ENCODE measurements at regions of chr22 and their contacts with region 1.

Region 1: DNA sequence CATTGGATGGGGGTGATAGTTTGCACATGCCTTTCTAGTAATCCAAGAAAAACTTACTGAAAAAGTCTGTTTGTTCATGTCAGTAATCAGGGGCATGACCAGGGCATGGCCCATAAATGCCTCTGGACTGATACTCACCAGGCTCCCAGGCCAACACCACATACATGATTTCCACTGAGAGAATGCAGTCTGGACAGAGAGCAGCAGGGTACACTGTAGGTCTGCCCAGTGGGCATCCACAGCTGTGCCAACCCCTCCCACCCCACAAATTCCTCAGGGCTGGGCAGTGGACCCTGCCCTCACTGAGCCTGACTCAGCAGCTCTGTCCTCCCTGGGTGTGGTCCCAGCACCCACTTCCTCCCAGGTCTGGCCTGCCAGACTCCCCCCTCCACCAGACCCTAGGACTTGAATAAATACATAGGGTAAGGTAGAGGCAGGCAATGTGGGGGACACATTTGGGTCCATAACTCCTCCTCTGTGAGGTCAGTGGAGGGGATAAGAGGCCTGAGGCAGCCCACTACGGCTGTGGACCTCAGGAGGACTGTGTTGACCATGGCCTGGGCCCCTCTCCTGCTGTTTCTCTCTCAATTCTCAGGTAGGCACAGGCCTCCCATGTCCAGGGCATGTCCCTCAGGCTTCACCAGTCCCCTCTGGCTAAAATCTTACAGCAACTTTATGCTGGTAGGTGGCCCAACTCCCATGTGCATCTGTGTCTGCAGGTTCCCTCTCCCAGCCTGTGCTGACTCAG is 92.2 kb upstream of the TOP3B start:
- DNase-seq: no peak
- H3K4me3 ChIP-seq: no peak overlapping the region
- H3K27ac ChIP-seq: no peak overlapping the region
- H3K4me1 ChIP-seq: no peaks in the 10 kb centered on the region
- H3K27me3 ChIP-seq: no peaks in the 10 kb centered on the region
- CTCF ChIP-seq: no peak
- POLR2A ChIP-seq: no peak

Region 2: DNA sequence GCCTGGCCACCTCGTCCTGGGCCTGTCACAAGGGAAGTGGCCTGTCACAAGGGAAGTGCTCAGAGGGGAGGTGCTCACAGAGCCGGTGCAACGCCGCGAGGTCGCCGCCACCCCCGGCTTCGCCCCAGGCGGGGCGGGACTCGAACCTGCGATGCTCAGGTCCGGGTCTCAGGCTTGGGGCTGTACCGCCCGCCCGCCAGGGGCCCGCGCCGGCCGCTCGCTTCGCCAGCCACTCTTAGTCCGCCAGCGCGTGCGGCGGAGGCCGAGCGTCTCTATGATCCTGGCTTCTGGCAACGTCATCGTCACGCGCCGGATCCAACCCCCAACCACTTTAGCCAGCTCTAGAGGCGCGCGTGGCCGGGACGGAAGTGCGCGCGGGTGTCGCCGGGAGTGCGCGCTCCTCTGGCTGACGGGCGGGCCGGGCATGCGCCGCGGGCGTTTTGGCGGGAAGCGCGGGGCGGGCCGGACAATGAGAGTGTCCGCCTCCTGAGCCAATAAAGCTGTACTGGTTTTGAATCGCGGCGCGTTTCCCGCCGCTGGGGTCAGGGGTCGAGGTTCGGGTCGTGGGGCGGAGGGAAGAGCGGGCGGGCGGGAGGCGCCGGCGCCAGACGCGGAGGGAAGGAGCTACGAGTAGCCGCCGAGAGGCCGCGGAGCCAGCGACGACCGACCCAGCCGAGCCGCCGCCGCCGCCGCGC is 1957.7 kb before region 1 on chr22 and contains the start of gene TRMT2A:
- intact Hi-C with region 1: loop called (anchors 10 kb)
- DNase-seq: peak in 1 of 2 donors; percentile 96
- H3K4me3 ChIP-seq: peak within 1 kb of the TSS; percentile 73 to 86
- H3K27ac ChIP-seq: peak within 1 kb of the TSS; percentile 82
- H3K4me1 ChIP-seq: peaks cover 40% of the 10 kb centered on the region
- H3K27me3 ChIP-seq: no peaks in the 10 kb centered on the region
- CTCF ChIP-seq: peak in 1 of 3 experiments; percentile 4
- POLR2A ChIP-seq: no peak
- total RNA-seq, gene TRMT2A: 66.5 TPM